Adrenal gland (tissue), 19 donors: ENCODE measurements at regions of chr6 and their contacts with region 1.

Region 1: DNA sequence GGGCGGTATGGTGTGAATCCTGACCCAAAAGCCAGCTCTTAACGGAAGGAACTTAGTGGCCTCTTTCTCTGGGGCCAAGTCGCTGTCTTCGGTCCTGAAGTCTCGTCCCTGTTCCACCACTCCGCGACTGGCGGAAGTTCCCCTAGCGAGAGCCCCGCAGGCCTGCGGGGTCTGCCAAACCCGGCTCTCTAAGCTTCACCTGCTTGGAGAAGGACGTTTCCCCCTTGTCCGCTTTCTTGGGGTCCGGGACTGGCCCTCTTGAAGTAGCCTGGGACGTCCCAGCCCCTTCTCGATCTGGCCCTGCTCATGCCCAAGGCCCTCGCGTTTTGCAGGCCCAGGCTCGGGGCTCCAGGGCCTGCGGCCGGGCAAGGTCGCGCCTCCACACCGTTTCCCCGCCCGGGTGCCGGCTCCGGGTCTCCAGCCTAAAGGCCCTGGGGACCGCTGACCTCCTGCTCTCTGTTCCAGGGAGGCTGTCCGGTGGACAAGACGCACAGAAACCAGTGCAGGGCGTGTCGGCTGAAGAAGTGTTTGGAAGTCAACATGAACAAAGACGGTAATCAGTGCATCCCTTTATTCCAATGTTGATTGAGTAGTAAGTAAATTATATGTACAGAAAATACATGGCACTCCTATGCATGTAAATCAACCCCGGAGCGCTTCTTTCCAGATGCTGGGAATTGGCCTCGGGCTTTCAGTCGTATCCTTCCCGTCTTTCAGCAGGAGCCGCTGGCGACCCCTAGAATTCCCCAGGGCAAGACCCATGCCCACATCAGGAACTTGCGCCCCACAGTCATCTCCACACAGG is 8.8 kb downstream of the NR2E1 start:
- DNase-seq: no peak
- H3K4me3 ChIP-seq: peak overlapping the region in 1 of 4 donors; percentile 49
- H3K27ac ChIP-seq: no peak overlapping the region
- H3K4me1 ChIP-seq: peaks cover 0 to 16% of the 10 kb centered on the region in 2 donors
- H3K27me3 ChIP-seq: peaks cover 65% of the 10 kb centered on the region
- CTCF ChIP-seq: no peak
- POLR2A ChIP-seq: no peak

Region 2: DNA sequence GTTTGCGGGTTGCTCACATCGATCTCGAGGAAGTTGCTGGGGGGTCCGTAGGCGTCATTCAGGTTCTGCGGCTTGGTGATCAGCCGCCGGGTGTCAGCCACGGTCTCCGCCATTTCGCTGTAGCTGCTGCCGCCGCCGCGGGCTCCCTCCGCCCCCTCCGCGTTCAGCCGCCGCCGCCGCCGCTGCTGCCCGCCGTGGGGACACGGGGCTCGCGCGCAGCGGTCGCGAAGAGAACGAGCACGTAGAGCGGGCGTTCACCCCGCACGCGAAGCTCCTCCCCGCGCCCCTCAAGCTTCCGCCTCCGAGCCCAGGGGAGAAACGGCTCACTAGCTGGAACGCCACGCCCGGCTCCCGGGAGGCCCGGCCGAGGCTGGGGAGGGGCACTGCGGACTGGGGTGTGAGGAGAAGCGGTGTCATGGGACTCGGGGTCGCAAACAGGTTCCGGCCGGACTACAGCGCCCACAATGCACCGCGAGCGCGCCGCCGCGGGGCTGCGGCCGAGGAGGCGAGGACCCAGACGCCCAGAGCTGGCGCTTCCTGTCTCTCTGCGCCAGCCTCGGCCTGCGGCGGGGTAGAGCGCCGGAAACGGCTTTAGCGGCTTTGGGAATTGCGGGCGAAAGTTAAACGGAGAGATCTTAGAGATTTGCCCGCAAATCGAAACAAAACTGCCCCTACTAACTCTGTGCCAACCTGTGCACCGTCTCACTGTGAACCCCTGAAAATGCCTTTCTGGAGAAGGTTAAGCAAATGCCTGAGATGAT is 86.4 kb after region 1 on chr6 and contains the start of gene SNX3:
- intact Hi-C with region 1: loop called in 1 of 2 experiments (anchors 10 kb)
- DNase-seq: peak; percentile 95 to 97 (median 95)
- H3K4me3 ChIP-seq: peak within 1 kb of the TSS; percentile 74 to 99 (median 88)
- H3K27ac ChIP-seq: peak within 1 kb of the TSS; percentile 86 to 99 (median 95)
- H3K4me1 ChIP-seq: peaks cover 13 to 39% of the 10 kb centered on the region in 2 donors
- H3K27me3 ChIP-seq: no peaks in the 10 kb centered on the region
- CTCF ChIP-seq: peak in 2 of 6 experiments; percentile 1 to 26
- POLR2A ChIP-seq: peak; percentile 59 to 87
- total RNA-seq, gene SNX3: 168 to 309 (median 237) TPM

Region 3: DNA sequence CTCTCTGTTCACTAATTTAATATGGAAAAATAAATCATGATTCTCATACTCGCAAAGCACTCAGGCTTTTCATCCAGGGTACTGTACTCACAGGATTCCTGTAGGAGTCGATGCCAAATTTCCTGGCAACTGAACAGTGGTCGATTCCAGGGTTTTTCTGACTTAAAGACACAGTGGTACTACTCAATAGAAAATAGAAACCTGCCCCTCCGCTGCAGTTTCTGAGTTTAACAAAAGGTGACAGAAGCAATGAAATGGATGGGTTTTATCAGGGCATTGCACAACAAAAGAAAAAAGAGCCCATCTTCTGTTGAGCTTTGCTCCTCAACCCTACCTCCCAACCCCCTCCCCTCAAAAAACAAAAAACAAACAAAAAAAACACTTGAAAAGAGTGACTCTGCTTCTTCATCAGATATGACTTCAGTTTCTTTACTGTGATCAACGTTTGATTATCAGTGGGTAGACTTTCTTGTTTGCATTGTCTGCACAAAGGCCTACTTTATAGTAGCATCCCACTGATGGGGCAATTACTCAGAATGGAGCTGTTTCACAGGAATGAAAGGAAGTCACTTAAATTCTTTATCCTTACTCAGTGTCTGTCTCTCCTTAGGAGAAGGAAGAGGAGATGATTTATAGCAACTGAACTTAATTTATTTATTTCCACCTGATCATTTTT is 290.0 kb after region 1 on chr6:
- intact Hi-C with region 1: no loop called
- DNase-seq: no peak
- H3K4me3 ChIP-seq: no peak overlapping the region
- H3K27ac ChIP-seq: no peak overlapping the region
- H3K4me1 ChIP-seq: peaks cover 0 to 9% of the 10 kb centered on the region in 2 donors
- H3K27me3 ChIP-seq: no peaks in the 10 kb centered on the region
- CTCF ChIP-seq: no peak
- POLR2A ChIP-seq: no peak

Region 4: GRCh38 chr6:108492131-108492766 is 317.7 kb after region 1 on chr6:
- intact Hi-C with region 1: loop called in 1 of 2 experiments (anchors 10 kb)
- DNase-seq: peak in 4 of 7 donors; percentile 17 to 25 (median 19)
- H3K4me3 ChIP-seq: no peak overlapping the region
- H3K27ac ChIP-seq: peak overlapping the region in 2 of 5 donors; percentile 33 to 57
- H3K4me1 ChIP-seq: peaks cover 11 to 18% of the 10 kb centered on the region in 2 donors
- H3K27me3 ChIP-seq: no peaks in the 10 kb centered on the region
- CTCF ChIP-seq: peak; percentile 50 to 78 (median 70)
- POLR2A ChIP-seq: no peak